ENCODE measurements at regions of chr1 and their contacts with region 1.

Region 1: GRCh38 chr1:186738926-186739325 is 58.7 kb upstream of the PTGS2 start:
- DNase-seq: peak; percentile 24
- H3K4me3 Mint-ChIP-seq: peak overlapping the region; percentile 69
- H3K27ac Mint-ChIP-seq: peak overlapping the region; percentile 86
- H3K4me1 Mint-ChIP-seq: peaks cover 60% of the 10 kb centered on the region
- H3K27me3 Mint-ChIP-seq: no peaks in the 10 kb centered on the region

Region 2: DNA sequence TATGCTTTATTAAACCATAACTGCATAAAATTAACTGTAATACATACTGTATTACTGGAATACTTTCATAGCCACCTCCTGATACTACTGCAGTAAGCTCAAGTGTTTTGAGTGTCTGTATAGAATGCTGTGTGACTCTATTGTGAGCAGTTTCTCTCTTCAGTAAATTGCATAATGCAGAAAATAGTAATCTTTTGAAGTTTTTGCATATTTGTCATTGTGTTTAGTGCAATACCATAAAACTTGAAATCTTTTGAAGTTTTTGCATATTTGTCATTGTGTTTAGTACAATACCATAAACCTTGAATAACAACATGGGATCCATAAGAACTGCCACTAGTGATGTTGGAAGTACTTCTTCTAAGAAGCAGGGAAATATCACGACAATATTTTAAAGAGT is 375.0 kb before region 1 on chr1:
- intact Hi-C with region 1: no loop called
- DNase-seq: no peak
- H3K4me3 Mint-ChIP-seq: no peak overlapping the region
- H3K27ac Mint-ChIP-seq: no peak overlapping the region
- H3K4me1 Mint-ChIP-seq: peaks cover 5% of the 10 kb centered on the region
- H3K27me3 Mint-ChIP-seq: no peaks in the 10 kb centered on the region

Region 3: DNA sequence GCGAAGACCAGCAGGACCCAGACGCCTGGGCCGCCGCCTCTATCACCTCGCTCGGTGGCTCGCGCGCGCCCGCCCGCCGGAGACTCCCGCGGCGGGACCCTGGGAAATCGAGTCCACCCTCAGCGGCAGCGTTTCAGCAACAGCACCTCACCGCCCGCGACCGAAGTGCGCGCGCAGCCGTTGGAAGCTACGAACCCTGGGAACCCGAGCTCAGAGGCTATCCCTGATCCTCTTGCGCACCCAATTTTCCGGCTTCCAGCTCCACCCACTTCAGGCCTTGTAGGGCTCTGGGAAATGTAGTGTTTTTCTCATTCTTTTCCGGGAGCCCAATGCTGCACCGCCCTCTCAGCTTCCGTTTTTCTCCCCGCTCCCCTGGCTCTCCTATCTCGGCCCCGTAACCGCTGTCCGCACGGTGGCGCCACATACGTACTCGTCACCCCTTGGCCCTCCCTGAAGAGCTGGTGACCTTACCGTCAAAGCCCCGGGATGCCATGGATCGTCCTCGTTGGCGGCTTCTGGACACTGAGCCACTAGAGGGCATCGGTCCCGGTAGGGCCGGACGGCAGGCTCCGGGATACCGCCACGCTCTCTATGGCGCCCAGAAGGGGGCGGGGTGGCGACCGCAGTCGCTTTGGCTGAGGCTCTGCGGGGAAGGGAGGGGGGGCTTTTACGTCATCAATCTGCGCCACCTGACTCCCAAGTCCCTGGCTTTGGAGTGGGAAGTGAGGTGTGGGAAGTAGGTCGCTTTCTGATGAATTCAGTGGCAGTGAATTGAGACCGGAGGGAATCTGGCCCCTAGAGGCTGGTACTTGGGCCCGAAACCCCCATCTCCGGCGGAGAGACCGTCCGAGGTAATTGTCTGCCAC is 363.6 kb before region 1 on chr1 and contains the starts of genes ODR4 and TPR:
- intact Hi-C with region 1: loop called (anchors 1 kb)
- DNase-seq: peak; percentile 97
- H3K4me3 Mint-ChIP-seq: peak within 1 kb of the TSS; percentile 96
- H3K27ac Mint-ChIP-seq: peak within 1 kb of the TSS; percentile 97
- H3K4me1 Mint-ChIP-seq: peaks cover 31% of the 10 kb centered on the region
- H3K27me3 Mint-ChIP-seq: no peaks in the 10 kb centered on the region
- total RNA-seq, gene ODR4: 16.1 and 17.0 TPM in 2 replicates
- total RNA-seq, gene TPR: 154 and 160 TPM in 2 replicates

Region 4: GRCh38 chr1:186680245-186681061 is 58.5 kb before region 1 on chr1 and contains the start of gene PTGS2:
- intact Hi-C with region 1: loop called (anchors 1 kb)
- DNase-seq: peak; percentile 62
- H3K4me3 Mint-ChIP-seq: peak within 1 kb of the TSS; percentile 87
- H3K27ac Mint-ChIP-seq: peak within 1 kb of the TSS; percentile 83
- H3K4me1 Mint-ChIP-seq: peaks cover 18% of the 10 kb centered on the region
- H3K27me3 Mint-ChIP-seq: peaks cover 49% of the 10 kb centered on the region
- total RNA-seq, gene PTGS2: 109 and 112 TPM in 2 replicates

Region 5: GRCh38 chr1:186763107-186763506 is 24.2 kb after region 1 on chr1:
- intact Hi-C with region 1: loop called (anchors 1 kb)
- DNase-seq: no peak
- H3K4me3 Mint-ChIP-seq: no peak overlapping the region
- H3K27ac Mint-ChIP-seq: peak overlapping the region; percentile 31
- H3K4me1 Mint-ChIP-seq: peaks cover 39% of the 10 kb centered on the region
- H3K27me3 Mint-ChIP-seq: peaks cover 2% of the 10 kb centered on the region

Region 6: DNA sequence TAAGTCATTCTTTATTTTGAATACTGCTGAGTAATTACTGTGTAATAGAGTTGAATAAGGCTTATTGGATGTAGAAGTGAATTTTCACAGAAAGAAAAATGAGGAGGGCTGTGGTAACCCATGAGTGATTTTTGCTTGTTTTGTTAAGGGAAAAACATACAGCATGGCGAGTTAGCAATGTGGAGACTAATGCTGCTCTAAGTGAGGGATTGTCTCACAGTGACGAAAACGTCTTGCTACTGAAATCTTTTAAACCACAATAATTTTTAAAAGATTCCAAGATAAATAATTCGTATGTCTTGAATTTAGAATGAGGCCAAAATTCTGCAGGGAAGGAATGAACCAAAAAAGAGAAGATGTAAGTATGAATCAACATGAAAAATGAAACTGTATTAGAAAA is 73.6 kb after region 1 on chr1:
- intact Hi-C with region 1: loop called (anchors 1 kb)
- DNase-seq: no peak
- H3K4me3 Mint-ChIP-seq: no peak overlapping the region
- H3K27ac Mint-ChIP-seq: no peak overlapping the region
- H3K4me1 Mint-ChIP-seq: peaks cover 13% of the 10 kb centered on the region
- H3K27me3 Mint-ChIP-seq: peaks cover 3% of the 10 kb centered on the region

Region 7: GRCh38 chr1:186899577-186899976 is 160.7 kb after region 1 on chr1:
- intact Hi-C with region 1: loop called (anchors 1 kb)
- DNase-seq: no peak
- H3K4me3 Mint-ChIP-seq: no peak overlapping the region
- H3K27ac Mint-ChIP-seq: peak overlapping the region; percentile 85
- H3K4me1 Mint-ChIP-seq: peaks cover 51% of the 10 kb centered on the region
- H3K27me3 Mint-ChIP-seq: no peaks in the 10 kb centered on the region

Region 8: DNA sequence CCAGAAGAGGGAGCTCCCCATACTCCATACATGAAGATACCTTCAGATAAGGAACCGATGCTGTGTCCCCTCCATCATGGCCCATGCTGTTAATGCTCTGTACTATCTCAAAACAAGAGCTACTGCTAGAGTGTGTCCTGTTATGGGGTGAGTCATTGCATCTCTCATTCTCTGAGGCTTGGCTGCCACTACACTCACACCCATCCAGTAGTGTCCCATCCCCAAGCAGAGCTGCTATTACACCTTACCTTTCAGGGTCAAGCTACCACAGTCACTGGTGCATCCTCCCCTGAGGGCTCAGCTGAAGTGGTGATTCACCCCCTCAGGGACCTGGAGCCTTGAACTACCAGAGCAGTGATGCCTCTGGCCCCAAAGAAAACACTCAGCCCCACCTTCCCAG is 288.3 kb after region 1 on chr1:
- intact Hi-C with region 1: no loop called
- DNase-seq: no peak
- H3K4me3 Mint-ChIP-seq: no peak overlapping the region
- H3K27ac Mint-ChIP-seq: no peak overlapping the region
- H3K4me1 Mint-ChIP-seq: no peaks in the 10 kb centered on the region
- H3K27me3 Mint-ChIP-seq: no peaks in the 10 kb centered on the region

Region 9: GRCh38 chr1:188228623-188229022 is 1489.7 kb after region 1 on chr1:
- intact Hi-C with region 1: no loop called
- DNase-seq: no peak
- H3K4me3 Mint-ChIP-seq: no peak overlapping the region
- H3K27ac Mint-ChIP-seq: no peak overlapping the region
- H3K4me1 Mint-ChIP-seq: no peaks in the 10 kb centered on the region
- H3K27me3 Mint-ChIP-seq: no peaks in the 10 kb centered on the region